ENCODE measurements at regions of chr15 and their contacts with region 1.

Region 1: DNA sequence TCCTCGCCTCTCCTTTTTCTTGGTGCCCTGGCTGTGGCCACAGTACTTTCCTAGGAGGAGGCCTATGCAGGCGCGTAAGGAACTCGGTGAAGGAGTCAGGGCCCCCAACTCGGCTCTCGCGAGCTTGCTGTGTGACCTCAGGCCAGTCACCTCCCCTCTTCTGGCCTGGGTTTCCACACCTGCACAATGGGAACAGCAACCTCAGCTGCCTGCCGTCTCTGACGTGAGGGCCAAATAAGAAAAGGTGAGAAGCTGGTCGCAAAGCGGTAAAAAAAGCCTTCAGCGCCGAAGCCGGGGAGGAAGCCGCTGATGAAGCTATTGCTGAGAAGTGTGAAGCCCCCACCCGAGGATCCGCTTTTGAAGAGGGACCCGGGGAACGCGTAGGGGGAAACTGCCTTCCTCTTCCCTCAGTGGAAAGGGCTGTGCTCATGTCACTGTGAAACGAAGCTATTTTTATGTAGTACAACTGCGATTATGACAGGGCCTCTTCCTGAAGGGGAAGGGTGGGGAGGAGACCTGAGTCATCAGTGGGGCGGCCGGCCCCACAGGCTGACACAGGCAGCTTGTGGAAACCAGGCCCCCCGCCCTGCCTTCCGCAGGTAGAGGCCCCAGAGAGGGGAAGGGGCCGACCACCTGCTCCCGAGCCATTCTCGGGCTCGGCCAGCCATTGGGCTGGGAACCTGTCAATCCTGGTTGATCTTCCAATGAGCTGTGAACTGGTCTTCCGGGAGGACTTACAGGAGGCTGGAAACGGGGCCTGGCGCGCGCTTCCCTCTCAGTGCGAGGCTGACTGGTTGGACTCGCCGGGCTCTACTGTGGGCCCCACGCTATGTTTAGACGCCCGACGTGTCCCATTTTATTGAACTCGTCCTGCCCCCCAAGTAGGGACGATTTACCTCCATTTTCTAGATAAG is 18.0 kb upstream of the ANKDD1A start:
- DNase-seq: peak; percentile 82 to 98 (median 95)
- ATAC-seq: peak; percentile 70
- H3K4me3 ChIP-seq: peak overlapping the region; percentile 42 to 64
- H3K4me3 Mint-ChIP-seq: peak overlapping the region; percentile 87
- H3K27ac ChIP-seq: peak overlapping the region; percentile 73 to 88
- H3K27ac Mint-ChIP-seq: peak overlapping the region; percentile 99
- H3K4me1 ChIP-seq: peaks cover 57% of the 10 kb centered on the region
- H3K4me1 Mint-ChIP-seq: peaks cover 66% of the 10 kb centered on the region
- H3K27me3 ChIP-seq: no peaks in the 10 kb centered on the region
- H3K27me3 Mint-ChIP-seq: no peaks in the 10 kb centered on the region
- CTCF ChIP-seq: no peak

Region 2: DNA sequence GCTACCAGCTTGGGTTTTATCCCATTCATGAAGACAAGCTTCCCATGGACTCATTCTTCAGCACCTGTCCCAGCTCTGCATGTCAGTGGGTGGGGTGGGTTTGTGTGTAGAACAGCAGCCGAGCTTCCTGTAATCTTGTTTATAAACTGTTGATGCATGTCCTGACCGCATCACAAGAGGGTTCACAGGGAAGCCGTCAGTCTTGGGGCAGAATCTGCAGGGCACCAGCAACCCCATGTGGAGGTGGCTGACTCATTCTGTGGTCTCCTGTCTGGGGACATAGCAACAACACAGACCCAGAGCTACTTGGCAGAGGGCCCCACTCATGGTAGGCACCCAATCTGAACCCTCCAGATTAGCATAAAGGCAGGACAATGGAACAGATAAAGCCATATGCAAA is 883.0 kb before region 1 on chr15:
- CTCF ChIA-PET with region 1: no interaction called
- POLR2A ChIA-PET with region 1: no interaction called
- intact Hi-C with region 1: loop called in 1 of 2 experiments (anchors 10 kb)
- DNase-seq: peak; percentile 78 to 97 (median 89)
- ATAC-seq: peak; percentile 89
- H3K4me3 ChIP-seq: no peak overlapping the region
- H3K4me3 Mint-ChIP-seq: peak overlapping the region; percentile 72
- H3K27ac ChIP-seq: peak overlapping the region; percentile 52 to 67
- H3K27ac Mint-ChIP-seq: peak overlapping the region; percentile 98
- H3K4me1 ChIP-seq: peaks cover 29% of the 10 kb centered on the region
- H3K4me1 Mint-ChIP-seq: peaks cover 40% of the 10 kb centered on the region
- H3K27me3 ChIP-seq: no peaks in the 10 kb centered on the region
- H3K27me3 Mint-ChIP-seq: no peaks in the 10 kb centered on the region
- CTCF ChIP-seq: no peak

Region 3: DNA sequence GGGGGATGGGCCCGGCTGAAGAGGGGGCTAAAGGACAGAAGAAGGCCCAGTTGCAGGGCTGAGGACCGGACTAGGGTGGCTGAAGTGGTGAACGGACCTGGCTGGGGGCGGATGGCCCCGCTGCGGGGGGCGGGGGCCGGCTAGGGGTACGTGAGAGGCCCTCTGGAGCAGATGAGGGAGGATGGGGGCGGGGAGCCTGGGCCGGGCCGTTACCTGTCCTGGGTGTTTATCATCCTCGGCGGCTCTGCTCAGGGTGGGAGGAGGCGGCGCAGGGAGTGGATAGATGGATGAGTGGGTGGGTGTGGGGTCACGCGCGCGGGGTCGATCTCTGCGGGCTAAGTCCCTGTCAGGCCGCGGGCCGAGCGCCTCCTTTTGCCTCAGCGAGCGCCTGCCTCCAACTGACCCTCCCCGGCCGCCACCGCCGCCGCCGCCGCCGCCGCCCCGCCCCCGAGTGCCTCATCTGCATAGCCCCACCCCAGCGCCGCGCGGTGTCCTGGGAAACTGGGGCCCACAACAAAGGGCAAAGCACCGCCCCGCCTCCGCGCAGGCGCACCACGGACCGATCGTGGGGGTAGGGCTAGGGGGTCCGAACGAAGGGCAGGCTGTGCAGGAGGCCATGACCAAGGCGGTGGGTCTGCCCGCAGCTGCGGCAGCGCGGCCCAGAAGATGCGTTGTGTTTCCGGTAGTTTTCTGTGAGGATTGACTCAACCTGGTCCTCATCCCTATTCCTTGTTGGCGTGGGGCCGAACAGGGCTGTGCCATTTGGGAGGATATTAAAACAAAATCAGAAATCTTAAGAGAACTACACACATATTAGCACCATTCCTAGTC is 190.7 kb before region 1 on chr15:
- CTCF ChIA-PET with region 1: no interaction called
- POLR2A ChIA-PET with region 1: interaction called, 3 read pairs
- intact Hi-C with region 1: loop called in 1 of 2 experiments (anchors 1 kb)
- DNase-seq: peak; percentile 90 to 97 (median 95)
- ATAC-seq: peak; percentile 95
- H3K4me3 ChIP-seq: peak overlapping the region; percentile 79 to 86
- H3K4me3 Mint-ChIP-seq: peak overlapping the region; percentile 91
- H3K27ac ChIP-seq: peak overlapping the region; percentile 60 to 66
- H3K27ac Mint-ChIP-seq: peak overlapping the region; percentile 92
- H3K4me1 ChIP-seq: peaks cover 47% of the 10 kb centered on the region
- H3K4me1 Mint-ChIP-seq: peaks cover 51% of the 10 kb centered on the region
- H3K27me3 ChIP-seq: no peaks in the 10 kb centered on the region
- H3K27me3 Mint-ChIP-seq: no peaks in the 10 kb centered on the region
- CTCF ChIP-seq: no peak

Region 4: GRCh38 chr15:64825431-64826294 is 68.1 kb before region 1 on chr15 and contains the start of gene PIF1:
- CTCF ChIA-PET with region 1: interaction called, 3 read pairs
- POLR2A ChIA-PET with region 1: interaction called, 7 read pairs
- intact Hi-C with region 1: loop called (anchors 1 kb)
- DNase-seq: peak; percentile 67 to 97 (median 84)
- ATAC-seq: peak; percentile 97
- H3K4me3 ChIP-seq: peak within 1 kb of the TSS; percentile 41 to 47
- H3K4me3 Mint-ChIP-seq: peak within 1 kb of the TSS; percentile 88
- H3K27ac ChIP-seq: peak within 1 kb of the TSS in 1 of 2 experiments; percentile 64
- H3K27ac Mint-ChIP-seq: peak within 1 kb of the TSS; percentile 70
- H3K4me1 ChIP-seq: peaks cover 23% of the 10 kb centered on the region
- H3K4me1 Mint-ChIP-seq: peaks cover 32% of the 10 kb centered on the region
- H3K27me3 ChIP-seq: no peaks in the 10 kb centered on the region
- H3K27me3 Mint-ChIP-seq: peaks cover 14% of the 10 kb centered on the region
- CTCF ChIP-seq: no peak
- total RNA-seq, gene PIF1: 0.50 to 0.76 TPM

Region 5: DNA sequence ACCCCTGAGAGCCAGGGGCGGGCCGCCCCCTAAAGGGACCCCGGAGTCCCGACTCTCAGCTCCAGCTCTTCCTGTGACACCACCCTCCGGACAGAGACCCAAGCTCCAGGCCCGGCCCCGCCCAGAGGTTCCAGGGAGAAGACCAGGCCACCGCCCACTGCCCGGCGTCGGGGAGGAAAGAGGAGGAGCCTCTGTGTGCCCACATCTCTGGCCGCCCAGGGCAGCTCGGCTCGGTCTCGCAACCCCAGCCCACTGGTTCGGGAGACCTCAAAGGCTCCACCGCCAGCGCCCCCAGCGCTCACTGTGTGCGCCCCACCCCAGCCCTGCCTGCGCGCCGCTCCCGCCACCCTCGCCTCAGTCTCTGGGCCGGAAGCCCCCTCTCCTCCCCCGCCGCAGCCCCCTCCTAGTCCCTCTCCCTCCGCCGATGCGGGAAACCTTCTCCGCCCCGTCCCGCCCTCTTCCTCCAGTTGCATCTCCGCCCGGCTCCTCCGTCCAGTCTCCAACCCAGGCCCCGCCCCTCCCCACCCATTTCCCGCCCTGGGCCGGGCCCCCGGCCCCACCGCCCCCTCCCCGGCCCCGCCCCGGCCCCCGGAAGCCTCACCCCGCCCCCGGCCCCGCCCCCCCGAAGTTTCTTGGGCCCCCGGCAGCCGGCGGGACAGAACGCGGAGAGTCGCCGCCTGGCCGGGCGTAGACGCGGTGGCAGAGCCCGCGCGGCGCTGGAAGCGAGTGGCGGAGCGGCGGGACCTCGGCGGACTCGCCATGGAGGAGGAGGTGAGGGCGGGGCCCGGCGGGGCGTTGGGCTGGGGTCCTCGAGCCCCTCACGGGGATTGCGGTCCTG is 52.3 kb before region 1 on chr15 and contains the start of gene PLEKHO2:
- CTCF ChIA-PET with region 1: interaction called, 22 read pairs
- POLR2A ChIA-PET with region 1: interaction called, 32 read pairs
- intact Hi-C with region 1: loop called (anchors 1 kb)
- DNase-seq: peak; percentile 66 to 96 (median 91)
- ATAC-seq: peak; percentile 76
- H3K4me3 ChIP-seq: peak within 1 kb of the TSS; percentile 65 to 71
- H3K4me3 Mint-ChIP-seq: peak within 1 kb of the TSS; percentile 95
- H3K27ac ChIP-seq: peak within 1 kb of the TSS; percentile 57 to 79
- H3K27ac Mint-ChIP-seq: peak within 1 kb of the TSS; percentile 93
- H3K4me1 ChIP-seq: peaks cover 81% of the 10 kb centered on the region
- H3K4me1 Mint-ChIP-seq: peaks cover 82% of the 10 kb centered on the region
- H3K27me3 ChIP-seq: no peaks in the 10 kb centered on the region
- H3K27me3 Mint-ChIP-seq: no peaks in the 10 kb centered on the region
- CTCF ChIP-seq: peak; percentile 40
- total RNA-seq, gene PLEKHO2: 7.9 to 8.2 TPM

Region 6: GRCh38 chr15:64989416-64990167 is 95.9 kb after region 1 on chr15 and contains the start of gene SPG21:
- CTCF ChIA-PET with region 1: no interaction called
- POLR2A ChIA-PET with region 1: no interaction called
- intact Hi-C with region 1: loop called (anchors 1 kb)
- DNase-seq: peak; percentile 77 to 96 (median 91)
- ATAC-seq: peak; percentile 88
- H3K4me3 ChIP-seq: peak within 1 kb of the TSS; percentile 73 to 88
- H3K4me3 Mint-ChIP-seq: peak within 1 kb of the TSS; percentile 96
- H3K27ac ChIP-seq: peak within 1 kb of the TSS; percentile 68 to 84
- H3K27ac Mint-ChIP-seq: peak within 1 kb of the TSS; percentile 94
- H3K4me1 ChIP-seq: peaks cover 12% of the 10 kb centered on the region
- H3K4me1 Mint-ChIP-seq: peaks cover 45% of the 10 kb centered on the region
- H3K27me3 ChIP-seq: no peaks in the 10 kb centered on the region
- H3K27me3 Mint-ChIP-seq: no peaks in the 10 kb centered on the region
- CTCF ChIP-seq: no peak
- total RNA-seq, gene SPG21: 25.1 to 28.2 TPM

Region 7: DNA sequence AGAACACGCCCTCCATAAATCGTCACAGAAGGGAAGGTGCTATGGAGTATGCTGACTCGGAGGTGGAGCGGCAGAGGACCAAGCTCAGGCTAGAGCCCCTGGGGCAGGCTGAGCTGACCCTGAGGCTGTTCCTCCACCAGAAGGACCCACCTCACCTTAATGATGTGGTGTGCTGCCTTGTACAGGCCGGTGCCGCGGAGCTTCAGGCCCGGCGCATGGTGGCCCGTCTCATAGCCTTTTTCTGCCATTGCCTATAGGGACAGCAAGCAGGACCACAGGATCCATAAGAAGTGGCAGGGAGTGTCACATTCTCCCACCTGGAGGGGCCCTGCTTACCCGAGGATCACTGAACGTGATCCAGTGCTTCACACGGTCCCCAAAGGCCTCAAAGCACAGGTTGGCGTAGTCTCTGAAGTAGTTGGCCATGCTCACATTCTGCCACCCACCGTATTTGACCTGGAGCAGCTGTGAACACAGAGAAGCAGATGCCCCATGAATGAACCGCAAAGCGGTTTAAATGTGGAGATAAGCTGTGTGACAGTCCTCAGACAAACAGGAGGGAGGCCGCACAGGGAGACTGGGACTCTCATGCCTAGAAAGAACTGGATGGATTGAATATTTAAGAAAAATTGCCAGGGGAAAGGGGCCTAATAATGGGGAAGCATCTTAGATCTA is 1667.2 kb after region 1 on chr15:
- CTCF ChIA-PET with region 1: no interaction called
- POLR2A ChIA-PET with region 1: no interaction called
- intact Hi-C with region 1: no loop called
- DNase-seq: no peak
- ATAC-seq: no peak
- H3K4me3 ChIP-seq: no peak overlapping the region
- H3K4me3 Mint-ChIP-seq: no peak overlapping the region
- H3K27ac ChIP-seq: no peak overlapping the region
- H3K27ac Mint-ChIP-seq: no peak overlapping the region
- H3K4me1 ChIP-seq: no peaks in the 10 kb centered on the region
- H3K4me1 Mint-ChIP-seq: no peaks in the 10 kb centered on the region
- H3K27me3 ChIP-seq: no peaks in the 10 kb centered on the region
- H3K27me3 Mint-ChIP-seq: no peaks in the 10 kb centered on the region
- CTCF ChIP-seq: no peak